GM13977 (cell line): ENCODE measurements at regions of chr9 and their contacts with region 1.

Region 1: GRCh38 chr9:100216178-100216787 is 117.2 kb downstream of the INVS start:
- DNase-seq: peak; percentile 27
- CTCF ChIP-seq: peak; percentile 76

Region 2: DNA sequence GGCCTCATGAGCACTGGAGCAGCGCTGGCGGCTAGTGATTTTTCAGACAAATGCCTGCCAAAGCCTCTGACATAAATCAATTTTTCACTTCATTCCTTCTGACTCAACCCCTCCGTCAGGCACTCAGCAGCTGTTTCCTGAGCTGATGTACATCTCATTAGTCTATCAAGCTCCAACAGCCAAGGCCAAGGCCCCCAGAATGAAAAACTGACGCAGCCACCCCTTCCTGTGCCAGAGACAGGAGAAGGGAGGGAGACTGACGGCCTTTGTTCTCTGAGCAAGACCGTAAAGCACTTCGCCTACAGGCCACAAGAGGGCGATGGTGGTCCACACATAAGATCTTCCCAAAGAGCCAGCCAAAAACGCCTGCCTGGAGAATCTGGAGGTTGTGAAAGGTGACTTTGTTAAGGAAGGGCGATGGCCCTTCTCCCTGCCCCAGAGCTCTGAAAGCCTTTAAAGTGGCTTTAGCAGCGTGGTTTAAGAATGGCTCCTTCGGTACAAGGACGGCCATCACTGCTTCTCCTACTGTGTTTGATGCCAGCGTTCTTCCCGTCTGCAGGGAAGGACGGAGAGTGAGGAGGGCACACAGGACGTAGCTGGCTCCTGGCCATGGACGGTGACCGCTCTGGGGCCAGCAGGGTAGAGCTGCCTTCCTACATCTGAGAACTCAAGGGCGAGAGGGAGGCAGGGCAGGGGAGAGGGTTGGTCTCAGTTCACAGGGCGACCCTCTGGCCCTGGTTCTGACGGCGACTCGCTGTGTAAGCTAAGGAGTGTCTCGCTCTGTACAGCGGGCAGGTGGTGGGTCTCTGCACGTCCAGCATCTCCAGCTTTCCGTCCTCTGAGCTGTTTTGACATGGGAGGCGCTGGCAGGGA is 1031.6 kb before region 1 on chr9:
- in situ Hi-C with region 1: loop called (anchors 25 kb)
- DNase-seq: peak; percentile 69
- CTCF ChIP-seq: peak; percentile 93

Region 3: DNA sequence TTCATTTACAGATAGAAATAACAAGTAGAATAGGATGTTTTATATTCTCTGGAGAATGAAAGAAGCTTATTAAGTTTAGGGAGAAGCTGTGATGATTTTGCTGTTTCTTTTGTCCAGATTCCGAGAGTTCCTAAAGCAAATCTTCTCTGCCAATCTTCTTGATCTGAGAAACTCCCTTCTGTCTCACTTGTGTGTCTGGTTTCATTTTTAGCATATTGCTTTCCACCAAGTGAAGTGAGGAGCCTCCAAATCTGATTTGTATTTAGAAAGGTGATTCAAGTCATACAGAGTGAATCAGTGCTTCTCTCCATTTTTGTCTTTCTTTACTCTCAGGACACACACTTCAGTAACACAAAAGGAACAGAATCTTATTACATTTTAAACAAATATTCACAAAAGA is 261.5 kb before region 1 on chr9:
- in situ Hi-C with region 1: no loop called
- DNase-seq: peak; percentile 34
- CTCF ChIP-seq: no peak

Region 4: GRCh38 chr9:100030548-100030947 is 185.7 kb before region 1 on chr9:
- in situ Hi-C with region 1: loop called (anchors 5 kb)
- DNase-seq: no peak
- CTCF ChIP-seq: no peak